HCT116 (cell line): ENCODE measurements at regions of chr3 and their contacts with region 1.

Region 1: DNA sequence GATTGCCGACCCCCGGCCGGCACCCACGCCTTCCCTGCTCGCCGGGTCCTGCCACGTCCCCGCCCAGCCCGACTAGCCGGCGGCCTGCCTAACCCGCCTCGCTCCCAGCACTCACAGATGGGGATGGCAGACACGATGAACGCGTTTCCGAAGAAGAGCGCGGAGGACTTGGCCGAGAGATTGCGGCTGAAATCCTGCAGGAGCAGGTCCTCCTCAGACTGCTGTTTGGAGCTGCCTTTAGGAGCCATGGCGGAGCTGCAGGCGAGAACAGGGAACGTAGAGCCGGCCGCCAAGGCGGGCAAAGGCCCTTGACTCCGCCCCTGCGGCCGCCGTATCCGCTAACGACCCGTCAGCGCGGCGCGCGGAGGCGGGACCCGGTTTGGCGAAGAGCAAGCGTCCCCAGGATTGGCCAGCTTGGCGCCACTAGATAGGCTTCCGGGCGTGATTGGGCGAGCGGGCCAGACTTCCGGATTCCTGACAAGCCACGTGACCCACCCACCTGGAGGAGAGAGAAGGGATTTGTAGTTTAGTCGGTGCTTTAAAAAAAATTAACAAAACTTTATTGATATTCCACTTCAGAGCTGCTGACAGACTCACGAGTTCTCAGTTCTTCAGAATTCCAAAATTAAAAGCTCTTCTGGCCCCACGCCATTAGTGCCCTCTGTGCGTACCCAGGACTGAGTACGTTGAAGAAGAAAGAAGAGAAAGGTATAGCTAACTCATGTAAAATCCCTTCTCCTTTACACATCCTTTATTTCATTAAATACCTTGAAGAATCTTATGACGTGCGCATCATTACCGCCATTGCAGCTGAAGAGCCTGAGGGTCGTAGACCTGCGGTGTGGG is at the start of gene SSR3:
- DNase-seq: peak; percentile 98
- ATAC-seq: peak; percentile 99
- H3K4me3 ChIP-seq: peak within 1 kb of the TSS; percentile 77 to 95
- H3K27ac ChIP-seq: peak within 1 kb of the TSS; percentile 63
- H3K4me1 ChIP-seq: peaks cover 3 to 22% of the 10 kb centered on the region in 2 experiments; a peak in 2 of 4 replicates
- H3K27me3 ChIP-seq: no peaks in the 10 kb centered on the region
- CTCF ChIP-seq: no peak
- POLR2A ChIP-seq: peak; percentile 75
- RAD21 ChIP-seq: no peak
- total RNA-seq, gene SSR3: 177 TPM

Region 2: GRCh38 chr3:156497326-156497725 is 57.7 kb before region 1 on chr3:
- CTCF ChIA-PET with region 1: no interaction called
- POLR2A ChIA-PET with region 1: no interaction called
- RAD21 ChIA-PET with region 1: no interaction called
- intact Hi-C with region 1: no loop called
- DNase-seq: no peak
- ATAC-seq: no peak
- H3K4me3 ChIP-seq: no peak overlapping the region
- H3K27ac ChIP-seq: no peak overlapping the region
- H3K4me1 ChIP-seq: no peaks in the 10 kb centered on the region
- H3K27me3 ChIP-seq: no peaks in the 10 kb centered on the region
- CTCF ChIP-seq: no peak
- POLR2A ChIP-seq: no peak
- RAD21 ChIP-seq: no peak

Region 3: GRCh38 chr3:156816800-156817645 is 262.0 kb after region 1 on chr3:
- CTCF ChIA-PET with region 1: no interaction called
- POLR2A ChIA-PET with region 1: no interaction called
- RAD21 ChIA-PET with region 1: no interaction called
- intact Hi-C with region 1: loop called (anchors 2 kb)
- DNase-seq: peak; percentile 77
- ATAC-seq: peak; percentile 75
- H3K4me3 ChIP-seq: peak overlapping the region; percentile 51 to 62
- H3K27ac ChIP-seq: peak overlapping the region; percentile 95
- H3K4me1 ChIP-seq: peaks cover 34 to 90% of the 10 kb centered on the region in 2 experiments
- H3K27me3 ChIP-seq: no peaks in the 10 kb centered on the region
- CTCF ChIP-seq: 0 out of 6 replicates have a peak, but pooled peaks of 1 of the 3 experiments have one; percentile 3
- POLR2A ChIP-seq: peak; percentile 51
- RAD21 ChIP-seq: no peak

Region 4: GRCh38 chr3:157122116-157122515 is 567.1 kb after region 1 on chr3:
- CTCF ChIA-PET with region 1: no interaction called
- POLR2A ChIA-PET with region 1: no interaction called
- RAD21 ChIA-PET with region 1: no interaction called
- intact Hi-C with region 1: loop called (anchors 2 kb)
- DNase-seq: peak; percentile 69
- ATAC-seq: peak; percentile 86
- H3K4me3 ChIP-seq: 0 out of 4 replicates have a peak overlapping the region, but pooled peaks of 1 of the 2 experiments have one; percentile 15
- H3K27ac ChIP-seq: no peak overlapping the region
- H3K4me1 ChIP-seq: peaks cover 14 to 55% of the 10 kb centered on the region in 2 experiments; a peak in 3 of 4 replicates
- H3K27me3 ChIP-seq: no peaks in the 10 kb centered on the region
- CTCF ChIP-seq: no peak
- POLR2A ChIP-seq: no peak
- RAD21 ChIP-seq: no peak